Activated B cell treated with CpG ODN at 0.5 μM for 24 hours (primary cell): ENCODE measurements at regions of chrX and their contacts with region 1.

Region 1: DNA sequence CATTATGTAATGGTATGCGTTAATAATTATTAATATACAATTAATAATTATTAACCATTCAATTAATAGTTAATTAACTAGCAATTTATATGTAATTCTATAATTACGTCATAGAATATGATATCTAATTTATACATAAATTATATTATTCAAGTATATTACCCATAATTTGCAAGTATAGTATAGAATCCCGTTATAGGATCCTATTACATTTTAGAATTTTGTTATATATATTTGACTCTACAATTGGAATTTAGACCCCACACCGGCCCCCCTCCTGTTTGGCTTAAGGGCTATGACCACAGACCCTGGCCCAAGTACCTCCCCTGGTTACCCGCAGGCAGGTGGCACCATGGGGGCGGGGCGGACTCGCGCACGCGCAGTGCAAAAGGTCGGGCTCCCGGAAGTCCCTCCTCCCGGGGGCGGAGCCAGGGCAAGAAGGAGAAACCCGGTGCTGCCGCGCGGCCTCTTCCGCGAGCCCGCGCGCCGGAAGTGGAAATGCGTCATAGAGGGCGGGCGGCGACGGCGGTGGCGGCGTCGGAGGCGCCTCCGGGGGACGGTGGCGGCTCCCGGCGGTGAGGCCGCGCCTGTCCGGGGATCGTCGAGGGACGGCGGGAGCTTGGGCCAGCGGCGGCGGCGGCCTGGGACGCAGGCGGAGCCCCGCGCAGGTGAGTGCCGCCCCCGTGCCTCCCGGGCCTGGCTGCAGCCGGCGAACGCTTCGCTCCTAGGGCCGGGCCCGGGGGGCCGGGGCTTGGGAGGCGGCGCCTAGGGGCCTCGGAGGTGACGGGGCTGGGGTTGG is at the start of gene AKAP17A:
- DNase-seq: peak; percentile 100
- ATAC-seq: peak; percentile 84
- H3K4me3 Mint-ChIP-seq: peak within 1 kb of the TSS; percentile 91
- H3K27ac Mint-ChIP-seq: peak within 1 kb of the TSS; percentile 83
- H3K4me1 Mint-ChIP-seq: peaks cover 51% of the 10 kb centered on the region
- H3K27me3 Mint-ChIP-seq: no peaks in the 10 kb centered on the region
- CTCF ChIP-seq: no peak
- total RNA-seq, gene AKAP17A: 75.7 and 84.7 TPM in 2 replicates

Region 2: DNA sequence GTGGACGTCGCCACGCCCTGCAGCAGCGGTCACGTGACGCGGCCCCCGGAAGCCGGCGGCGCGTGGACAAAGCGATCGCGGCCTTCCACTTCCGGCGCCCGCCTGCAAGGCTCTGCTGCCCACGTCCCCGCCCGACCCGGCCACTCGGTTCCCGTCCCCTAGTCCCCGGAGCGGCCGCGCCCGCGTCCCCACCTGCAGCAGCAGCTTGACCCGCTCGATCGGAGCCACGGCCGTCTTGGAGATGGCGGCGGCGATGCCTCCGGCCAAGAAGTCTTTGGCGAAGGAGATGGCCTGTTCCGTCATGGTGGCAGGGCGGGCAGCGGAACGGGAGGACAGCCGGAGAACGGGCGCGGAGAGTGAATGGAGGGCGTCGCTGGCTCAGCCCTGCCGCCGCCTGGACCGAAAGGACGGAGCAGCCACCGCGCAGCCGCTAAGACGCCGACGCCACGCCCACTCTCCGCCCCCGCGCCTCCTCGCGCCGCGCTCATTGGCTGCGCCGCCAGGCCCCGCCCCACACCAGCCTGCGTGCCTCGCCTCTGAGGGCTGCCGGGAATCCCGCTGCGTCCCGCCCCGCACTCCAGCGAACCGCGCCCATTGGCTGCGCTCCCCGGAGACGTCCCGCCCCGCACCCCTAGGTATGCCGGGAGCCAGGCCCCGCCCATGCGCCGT is 199.5 kb before region 1 on chrX and contains the start of gene SLC25A6:
- CTCF ChIA-PET with region 1: no interaction called
- POLR2A ChIA-PET with region 1: no interaction called
- intact Hi-C with region 1: loop called (anchors 1 kb)
- DNase-seq: peak; percentile 100
- ATAC-seq: peak; percentile 96
- H3K4me3 Mint-ChIP-seq: peak within 1 kb of the TSS; percentile 93
- H3K27ac Mint-ChIP-seq: peak within 1 kb of the TSS; percentile 93
- H3K4me1 Mint-ChIP-seq: peaks cover 47% of the 10 kb centered on the region
- H3K27me3 Mint-ChIP-seq: no peaks in the 10 kb centered on the region
- CTCF ChIP-seq: no peak
- total RNA-seq, gene SLC25A6: 436 and 472 TPM in 2 replicates

Region 3: DNA sequence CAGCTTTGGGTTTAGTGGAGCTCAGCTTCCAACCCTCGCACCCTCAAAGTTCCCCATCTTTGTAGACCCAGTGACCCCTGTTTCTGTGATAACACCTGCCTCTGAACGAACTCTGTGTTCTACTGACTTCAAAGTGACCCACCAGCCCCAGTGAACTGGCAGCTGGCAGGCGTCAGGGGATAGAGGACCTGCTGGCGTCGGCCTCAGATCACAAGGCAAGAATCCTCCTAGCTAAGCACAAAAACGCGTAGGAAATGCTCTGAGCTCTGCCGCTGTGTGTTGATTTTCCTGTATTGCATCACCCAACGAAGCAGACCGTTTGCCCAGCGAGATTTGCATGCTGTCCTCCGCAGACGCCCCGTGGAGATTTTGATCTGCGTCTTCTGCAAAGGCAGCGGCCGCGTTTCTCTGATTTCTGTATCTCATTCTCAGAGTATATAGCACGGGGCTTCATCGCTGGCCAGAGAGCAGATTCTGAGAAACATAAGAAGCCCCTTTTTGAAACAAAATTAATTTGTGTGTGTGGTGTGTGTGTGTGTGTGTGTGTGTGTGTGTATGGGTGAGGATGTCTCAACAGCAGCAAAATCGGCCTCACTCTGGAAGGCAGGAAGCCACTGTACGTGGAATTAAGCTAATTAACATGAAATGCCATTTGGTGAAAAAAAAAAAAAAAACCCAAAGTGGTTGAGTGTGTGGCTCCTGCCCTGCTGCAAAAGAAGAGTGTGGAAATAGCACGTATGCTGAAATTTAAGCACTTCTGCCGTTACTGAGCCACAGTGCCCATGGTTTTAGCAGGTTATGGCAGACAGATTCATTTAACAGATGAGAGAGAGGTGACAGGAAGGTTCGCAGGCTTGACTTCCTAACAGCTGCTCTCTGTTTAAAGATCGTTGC is 109.4 kb before region 1 on chrX:
- CTCF ChIA-PET with region 1: no interaction called
- POLR2A ChIA-PET with region 1: no interaction called
- intact Hi-C with region 1: loop called (anchors 1 kb)
- DNase-seq: peak; percentile 63
- ATAC-seq: peak; percentile 53
- H3K4me3 Mint-ChIP-seq: peak overlapping the region; percentile 81
- H3K27ac Mint-ChIP-seq: peak overlapping the region; percentile 97
- H3K4me1 Mint-ChIP-seq: peaks cover 90% of the 10 kb centered on the region
- H3K27me3 Mint-ChIP-seq: no peaks in the 10 kb centered on the region
- CTCF ChIP-seq: no peak

Region 4: GRCh38 chrX:1507511-1508463 is 83.5 kb before region 1 on chrX:
- CTCF ChIA-PET with region 1: no interaction called
- POLR2A ChIA-PET with region 1: no interaction called
- intact Hi-C with region 1: loop called (anchors 2 kb)
- DNase-seq: peak; percentile 66
- ATAC-seq: peak; percentile 77
- H3K4me3 Mint-ChIP-seq: no peak overlapping the region
- H3K27ac Mint-ChIP-seq: no peak overlapping the region
- H3K4me1 Mint-ChIP-seq: peaks cover 15% of the 10 kb centered on the region
- H3K27me3 Mint-ChIP-seq: no peaks in the 10 kb centered on the region
- CTCF ChIP-seq: no peak

Region 5: GRCh38 chrX:1521459-1521956 is 69.8 kb before region 1 on chrX:
- CTCF ChIA-PET with region 1: no interaction called
- POLR2A ChIA-PET with region 1: no interaction called
- intact Hi-C with region 1: no loop called
- DNase-seq: peak; percentile 66
- ATAC-seq: peak; percentile 85
- H3K4me3 Mint-ChIP-seq: peak overlapping the region; percentile 83
- H3K27ac Mint-ChIP-seq: peak overlapping the region; percentile 97
- H3K4me1 Mint-ChIP-seq: peaks cover 64% of the 10 kb centered on the region
- H3K27me3 Mint-ChIP-seq: no peaks in the 10 kb centered on the region
- CTCF ChIP-seq: no peak

Region 6: GRCh38 chrX:2608638-2609430 is 1017.5 kb after region 1 on chrX:
- CTCF ChIA-PET with region 1: no interaction called
- POLR2A ChIA-PET with region 1: no interaction called
- intact Hi-C with region 1: loop called (anchors 5 kb)
- DNase-seq: peak; percentile 84
- ATAC-seq: peak; percentile 97
- H3K4me3 Mint-ChIP-seq: peak overlapping the region; percentile 93
- H3K27ac Mint-ChIP-seq: peak overlapping the region; percentile 81
- H3K4me1 Mint-ChIP-seq: peaks cover 36% of the 10 kb centered on the region
- H3K27me3 Mint-ChIP-seq: no peaks in the 10 kb centered on the region
- CTCF ChIP-seq: no peak